CD8-positive, alpha-beta T cell (primary cell): ENCODE measurements at regions of chr16 and their contacts with region 1.

Region 1: GRCh38 chr16:71883849-71884638 is at the start of gene ZNF821:
- DNase-seq: peak; percentile 48 to 92 (median 72)
- ATAC-seq: peak; percentile 48
- H3K4me3 ChIP-seq: peak within 1 kb of the TSS; percentile 80 to 81
- H3K4me3 Mint-ChIP-seq: peak within 1 kb of the TSS; percentile 94
- H3K27ac ChIP-seq: peak within 1 kb of the TSS; percentile 47 to 83
- H3K27ac Mint-ChIP-seq: peak within 1 kb of the TSS; percentile 95
- H3K4me1 ChIP-seq: peaks cover 39% of the 10 kb centered on the region
- H3K4me1 Mint-ChIP-seq: peaks cover 51% of the 10 kb centered on the region
- H3K27me3 ChIP-seq: no peaks in the 10 kb centered on the region
- H3K27me3 Mint-ChIP-seq: no peaks in the 10 kb centered on the region
- CTCF ChIP-seq: no peak
- total RNA-seq, gene ZNF821: 8.4 to 10.1 TPM

Region 2: DNA sequence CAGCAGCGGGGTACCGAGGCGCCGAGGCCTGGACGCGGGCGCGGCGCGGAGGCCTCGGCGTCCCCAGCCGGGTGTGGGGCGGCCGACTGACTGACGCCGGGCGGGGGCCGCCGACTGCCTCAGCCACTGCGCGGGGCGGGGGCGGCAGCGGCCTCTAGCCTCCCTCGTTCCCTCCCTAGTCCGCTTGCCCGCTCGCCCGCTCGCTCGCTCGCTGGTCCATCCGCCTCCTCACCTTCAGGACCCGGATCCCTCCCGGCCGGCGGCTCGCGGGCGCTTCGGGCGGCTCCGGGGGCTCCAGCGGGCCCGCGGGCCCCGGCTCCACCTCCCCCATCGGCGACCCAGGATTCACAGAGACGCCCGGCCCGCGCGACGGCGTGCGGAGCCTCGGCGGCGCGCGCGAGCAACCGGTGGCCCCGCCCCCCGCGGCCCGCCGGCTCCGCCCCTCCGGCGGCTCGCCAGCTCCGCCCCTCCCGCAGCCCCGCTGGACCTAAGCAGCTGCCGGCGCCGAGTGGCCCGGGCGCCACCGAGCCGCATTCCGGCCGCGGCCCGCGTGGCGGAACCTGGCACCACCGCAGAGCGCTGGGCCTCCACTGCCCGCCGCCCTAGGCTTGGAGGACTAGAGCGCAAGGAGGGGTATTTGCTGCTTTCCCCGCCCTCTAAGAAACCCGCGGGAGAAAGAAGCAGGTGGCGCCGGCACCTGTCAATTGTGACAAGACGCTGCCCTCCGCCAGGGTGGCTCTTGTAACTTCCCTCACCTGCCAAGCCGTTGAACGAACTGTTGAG is 160.3 kb before region 1 on chr16:
- CTCF ChIA-PET with region 1: no interaction called
- POLR2A ChIA-PET with region 1: no interaction called
- intact Hi-C with region 1: loop called (anchors 1 kb)
- DNase-seq: peak; percentile 61 to 90 (median 79)
- ATAC-seq: peak; percentile 82
- H3K4me3 ChIP-seq: peak overlapping the region; percentile 48 to 73
- H3K4me3 Mint-ChIP-seq: peak overlapping the region; percentile 79
- H3K27ac ChIP-seq: peak overlapping the region in 1 of 2 experiments; percentile 69
- H3K27ac Mint-ChIP-seq: peak overlapping the region; percentile 67
- H3K4me1 ChIP-seq: peaks cover 14% of the 10 kb centered on the region
- H3K4me1 Mint-ChIP-seq: peaks cover 15% of the 10 kb centered on the region
- H3K27me3 ChIP-seq: no peaks in the 10 kb centered on the region
- H3K27me3 Mint-ChIP-seq: no peaks in the 10 kb centered on the region
- CTCF ChIP-seq: no peak

Region 3: DNA sequence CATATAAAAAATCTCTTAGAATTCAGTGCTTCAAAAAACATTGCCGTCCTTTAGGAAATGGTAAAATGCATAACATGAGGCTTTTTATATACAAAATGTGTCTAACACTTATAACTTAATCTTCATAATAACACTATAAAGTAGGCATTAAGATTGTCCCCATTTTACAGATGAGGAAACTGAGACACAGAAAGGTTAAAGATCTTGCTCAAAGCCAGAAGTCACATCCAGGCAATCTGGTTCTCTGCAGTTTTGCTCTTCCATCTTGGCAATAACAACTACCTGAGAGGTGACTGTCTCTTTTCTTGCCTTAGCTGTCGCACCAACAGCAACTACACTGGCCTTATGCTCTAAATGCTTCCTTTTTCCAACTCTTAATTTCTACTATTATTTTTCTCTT is 100.0 kb before region 1 on chr16:
- CTCF ChIA-PET with region 1: no interaction called
- POLR2A ChIA-PET with region 1: no interaction called
- intact Hi-C with region 1: no loop called
- DNase-seq: no peak
- ATAC-seq: no peak
- H3K4me3 ChIP-seq: no peak overlapping the region
- H3K4me3 Mint-ChIP-seq: no peak overlapping the region
- H3K27ac ChIP-seq: no peak overlapping the region
- H3K27ac Mint-ChIP-seq: no peak overlapping the region
- H3K4me1 ChIP-seq: peaks cover 8% of the 10 kb centered on the region
- H3K4me1 Mint-ChIP-seq: peaks cover 38% of the 10 kb centered on the region
- H3K27me3 ChIP-seq: no peaks in the 10 kb centered on the region
- H3K27me3 Mint-ChIP-seq: no peaks in the 10 kb centered on the region
- CTCF ChIP-seq: no peak

Region 4: DNA sequence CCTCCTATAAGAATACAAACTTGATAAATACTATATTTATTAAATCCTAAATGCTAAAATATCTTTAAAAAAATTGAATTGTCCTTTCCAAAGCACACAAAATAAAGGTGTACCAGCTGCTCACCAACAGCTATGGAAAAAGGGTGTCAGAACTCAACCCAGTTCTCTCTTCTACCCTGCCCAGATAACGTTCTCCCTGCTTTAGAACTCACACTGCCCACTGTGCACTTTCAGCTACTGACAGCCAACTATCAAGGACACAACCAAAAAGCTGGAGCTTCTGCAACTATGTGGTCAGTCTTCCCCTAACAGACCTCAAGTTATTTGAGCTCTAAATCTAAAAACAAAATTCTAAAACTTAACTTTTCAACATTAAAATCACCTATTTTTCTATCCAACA is 89.1 kb before region 1 on chr16:
- CTCF ChIA-PET with region 1: interaction called, 14 read pairs
- POLR2A ChIA-PET with region 1: interaction called, 3 read pairs
- intact Hi-C with region 1: no loop called
- DNase-seq: no peak
- ATAC-seq: no peak
- H3K4me3 ChIP-seq: no peak overlapping the region
- H3K4me3 Mint-ChIP-seq: peak overlapping the region; percentile 3
- H3K27ac ChIP-seq: peak overlapping the region in 1 of 2 experiments; percentile 31
- H3K27ac Mint-ChIP-seq: peak overlapping the region; percentile 32
- H3K4me1 ChIP-seq: peaks cover 53% of the 10 kb centered on the region
- H3K4me1 Mint-ChIP-seq: peaks cover 65% of the 10 kb centered on the region
- H3K27me3 ChIP-seq: no peaks in the 10 kb centered on the region
- H3K27me3 Mint-ChIP-seq: no peaks in the 10 kb centered on the region
- CTCF ChIP-seq: no peak

Region 5: GRCh38 chr16:71845639-71846430 is 38.2 kb before region 1 on chr16 and contains the start of gene ATXN1L:
- CTCF ChIA-PET with region 1: interaction called, 51 read pairs
- POLR2A ChIA-PET with region 1: interaction called, 46 read pairs
- intact Hi-C with region 1: loop called (anchors 1 kb)
- DNase-seq: peak; percentile 88 to 98 (median 93)
- ATAC-seq: peak; percentile 94
- H3K4me3 ChIP-seq: peak within 1 kb of the TSS; percentile 87 to 97
- H3K4me3 Mint-ChIP-seq: peak within 1 kb of the TSS; percentile 90
- H3K27ac ChIP-seq: peak within 1 kb of the TSS; percentile 88 to 93
- H3K27ac Mint-ChIP-seq: peak within 1 kb of the TSS; percentile 94
- H3K4me1 ChIP-seq: peaks cover 16% of the 10 kb centered on the region
- H3K4me1 Mint-ChIP-seq: peaks cover 39% of the 10 kb centered on the region
- H3K27me3 ChIP-seq: no peaks in the 10 kb centered on the region
- H3K27me3 Mint-ChIP-seq: no peaks in the 10 kb centered on the region
- CTCF ChIP-seq: peak; percentile 12
- total RNA-seq, gene ATXN1L: 64.9 to 67.4 TPM

Region 6: GRCh38 chr16:71867939-71868338 is 16.1 kb before region 1 on chr16:
- CTCF ChIA-PET with region 1: interaction called, 18 read pairs
- POLR2A ChIA-PET with region 1: interaction called, 8 read pairs
- intact Hi-C with region 1: no loop called
- DNase-seq: no peak
- ATAC-seq: no peak
- H3K4me3 ChIP-seq: no peak overlapping the region
- H3K4me3 Mint-ChIP-seq: no peak overlapping the region
- H3K27ac ChIP-seq: no peak overlapping the region
- H3K27ac Mint-ChIP-seq: peak overlapping the region; percentile 11
- H3K4me1 ChIP-seq: peaks cover 6% of the 10 kb centered on the region
- H3K4me1 Mint-ChIP-seq: peaks cover 15% of the 10 kb centered on the region
- H3K27me3 ChIP-seq: no peaks in the 10 kb centered on the region
- H3K27me3 Mint-ChIP-seq: no peaks in the 10 kb centered on the region
- CTCF ChIP-seq: no peak

Region 7: GRCh38 chr16:71961066-71962039 is 77.3 kb after region 1 on chr16:
- CTCF ChIA-PET with region 1: interaction called, 9 read pairs
- POLR2A ChIA-PET with region 1: no interaction called
- intact Hi-C with region 1: loop called in 1 of 2 experiments (anchors 2 kb)
- DNase-seq: peak; percentile 67 to 90 (median 82)
- ATAC-seq: peak; percentile 92
- H3K4me3 ChIP-seq: no peak overlapping the region
- H3K4me3 Mint-ChIP-seq: no peak overlapping the region
- H3K27ac ChIP-seq: no peak overlapping the region
- H3K27ac Mint-ChIP-seq: no peak overlapping the region
- H3K4me1 ChIP-seq: peaks cover 5% of the 10 kb centered on the region
- H3K4me1 Mint-ChIP-seq: peaks cover 5% of the 10 kb centered on the region
- H3K27me3 ChIP-seq: no peaks in the 10 kb centered on the region
- H3K27me3 Mint-ChIP-seq: no peaks in the 10 kb centered on the region
- CTCF ChIP-seq: peak; percentile 83